ENCODE measurements at regions of chr13 and their contacts with region 1.

Region 1: GRCh38 chr13:31044377-31045285 is 112.2 kb downstream of the TEX26 start:
- DNase-seq: peak; percentile 59 to 73
- H3K4me3 ChIP-seq: peak overlapping the region; percentile 28; the same call in 1 of the 2 replicates
- H3K27ac ChIP-seq: peak overlapping the region; percentile 96
- H3K4me1 ChIP-seq: peaks cover 25% of the 10 kb centered on the region
- H3K27me3 ChIP-seq: no peaks in the 10 kb centered on the region
- CTCF ChIP-seq: peak; percentile 96

Region 2: GRCh38 chr13:30132623-30133553 is 911.7 kb before region 1 on chr13:
- CTCF ChIA-PET with region 1: no interaction called
- POLR2A ChIA-PET with region 1: no interaction called
- intact Hi-C with region 1: loop called (anchors 1 kb)
- DNase-seq: peak; percentile 75 to 90
- H3K4me3 ChIP-seq: no peak overlapping the region
- H3K27ac ChIP-seq: no peak overlapping the region
- H3K4me1 ChIP-seq: peaks cover 7% of the 10 kb centered on the region
- H3K27me3 ChIP-seq: no peaks in the 10 kb centered on the region
- CTCF ChIP-seq: peak; percentile 90

Region 3: DNA sequence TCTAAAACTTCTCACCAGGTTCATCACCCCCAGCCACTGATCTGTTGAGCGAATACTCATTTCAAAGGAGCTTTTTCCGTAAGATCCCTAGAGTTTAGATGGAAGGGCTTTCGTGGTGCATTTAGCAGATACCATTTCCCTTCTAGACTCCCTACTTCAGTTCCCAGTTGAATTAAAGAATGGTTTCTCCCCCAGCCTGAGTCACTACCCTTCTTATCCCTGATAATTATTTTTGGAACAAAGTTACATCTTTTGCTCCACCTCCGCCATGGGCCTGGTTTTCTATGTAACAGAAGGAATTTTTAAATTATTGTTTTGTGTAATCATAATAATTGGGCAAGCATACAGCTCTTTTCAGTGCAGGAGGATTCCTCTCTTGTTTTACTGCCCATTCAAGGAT is 405.0 kb before region 1 on chr13:
- CTCF ChIA-PET with region 1: no interaction called
- POLR2A ChIA-PET with region 1: interaction called, 25 read pairs
- intact Hi-C with region 1: no loop called
- DNase-seq: no peak
- H3K4me3 ChIP-seq: no peak overlapping the region
- H3K27ac ChIP-seq: no peak overlapping the region
- H3K4me1 ChIP-seq: no peaks in the 10 kb centered on the region
- H3K27me3 ChIP-seq: no peaks in the 10 kb centered on the region
- CTCF ChIP-seq: no peak

Region 4: DNA sequence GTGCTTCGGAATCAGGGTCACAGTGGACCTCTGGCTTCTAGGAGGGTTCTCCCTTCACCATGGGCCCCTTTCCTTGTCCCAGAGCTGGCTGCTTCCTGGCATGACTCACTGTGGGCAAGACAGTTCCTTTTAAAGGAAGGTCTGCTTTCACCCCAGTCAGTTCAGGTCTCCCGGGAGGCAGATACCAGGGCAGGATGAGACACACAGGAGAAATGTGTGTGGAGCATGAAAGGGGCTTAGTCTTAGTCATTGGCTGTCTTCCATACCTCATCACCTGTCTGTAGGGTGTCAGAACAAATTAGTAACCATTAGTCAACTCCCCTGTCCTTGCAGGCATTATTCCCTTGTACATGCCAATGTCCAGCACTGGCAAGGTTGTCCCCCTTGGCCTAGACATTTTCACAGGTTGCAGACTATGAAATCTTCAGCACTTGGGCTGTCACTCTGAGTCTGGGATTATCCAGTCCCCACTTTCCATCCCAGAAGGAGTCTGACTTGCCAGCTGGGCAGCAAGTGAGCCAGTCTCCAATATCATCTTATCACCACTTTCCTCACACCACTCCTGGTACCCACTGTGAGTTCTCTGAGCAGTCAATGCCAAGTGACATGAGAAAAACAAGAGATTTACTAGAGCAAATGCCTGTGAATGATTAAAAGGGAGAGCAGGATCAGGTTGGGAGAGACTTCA is 215.3 kb before region 1 on chr13:
- CTCF ChIA-PET with region 1: interaction called, 3 read pairs
- POLR2A ChIA-PET with region 1: no interaction called
- intact Hi-C with region 1: loop called (anchors 1 kb)
- DNase-seq: peak; percentile 59 to 91
- H3K4me3 ChIP-seq: no peak overlapping the region
- H3K27ac ChIP-seq: peak overlapping the region; percentile 86
- H3K4me1 ChIP-seq: peaks cover 62% of the 10 kb centered on the region
- H3K27me3 ChIP-seq: no peaks in the 10 kb centered on the region
- CTCF ChIP-seq: no peak

Region 5: DNA sequence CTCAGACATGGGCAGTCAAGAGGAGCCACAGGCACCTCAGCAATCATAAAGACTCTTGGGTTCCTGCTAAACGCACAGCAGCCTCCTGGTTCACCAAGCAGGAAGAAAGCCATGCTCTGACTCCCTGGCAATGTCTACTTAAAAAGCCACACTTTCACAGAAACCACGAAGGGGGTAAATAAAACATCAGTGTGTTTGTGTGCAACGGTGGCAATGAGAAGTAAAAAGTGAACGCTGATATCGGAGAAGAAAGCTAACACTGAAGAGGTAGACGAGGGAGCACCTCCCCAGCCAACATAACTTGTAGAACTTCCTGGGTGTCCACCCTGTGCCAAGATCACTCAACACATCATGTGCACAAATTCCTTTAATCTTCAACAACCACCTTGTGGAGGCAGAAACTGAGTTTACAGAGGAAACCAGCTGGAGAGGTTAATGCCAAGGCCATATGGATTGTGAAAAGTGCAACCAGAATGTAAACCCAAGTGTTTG is 86.9 kb after region 1 on chr13:
- CTCF ChIA-PET with region 1: no interaction called
- POLR2A ChIA-PET with region 1: no interaction called
- intact Hi-C with region 1: loop called (anchors 10 kb)
- DNase-seq: no peak
- H3K4me3 ChIP-seq: no peak overlapping the region
- H3K27ac ChIP-seq: no peak overlapping the region
- H3K4me1 ChIP-seq: no peaks in the 10 kb centered on the region
- H3K27me3 ChIP-seq: peaks cover 7% of the 10 kb centered on the region
- CTCF ChIP-seq: no peak

Region 6: DNA sequence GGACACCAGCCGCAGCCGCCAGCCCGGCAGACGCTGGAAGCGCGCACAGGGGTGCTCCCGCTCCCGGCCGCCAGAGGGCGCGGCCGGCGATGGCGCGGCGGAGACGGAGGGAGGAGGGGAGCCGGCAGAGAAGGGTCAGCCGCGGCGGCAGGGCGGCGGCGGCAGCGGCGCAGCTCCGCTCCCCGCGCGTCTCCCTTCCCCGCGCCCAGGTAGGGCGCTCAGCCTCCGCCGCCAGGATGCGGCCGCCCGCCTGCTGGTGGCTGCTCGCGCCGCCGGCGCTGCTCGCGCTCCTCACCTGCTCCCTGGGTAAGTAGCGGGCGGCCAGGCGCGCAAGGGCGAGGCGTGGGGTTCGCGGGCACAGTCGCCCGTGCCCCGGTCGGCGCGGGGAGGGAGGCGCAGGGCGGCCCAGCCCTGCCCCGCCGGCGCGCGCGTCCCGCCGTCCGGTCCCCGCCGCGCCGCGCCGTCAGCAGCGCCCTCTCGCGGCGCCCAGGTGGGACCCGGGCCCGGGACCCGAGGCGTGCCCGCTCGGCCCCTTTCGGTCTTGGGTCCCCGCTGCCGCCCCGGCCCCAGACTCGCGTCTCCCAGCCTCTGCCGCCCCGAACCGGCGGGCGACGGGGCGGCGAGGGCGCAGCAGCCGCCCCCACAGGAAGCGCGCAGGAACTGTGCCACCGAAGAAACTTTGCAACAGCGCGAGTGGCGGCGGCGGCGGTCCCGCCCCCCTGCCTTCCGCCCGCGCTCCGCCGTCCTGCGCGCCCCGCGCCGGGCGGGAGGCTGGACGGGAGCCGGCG is 155.4 kb after region 1 on chr13 and contains the start of gene B3GLCT:
- CTCF ChIA-PET with region 1: no interaction called
- POLR2A ChIA-PET with region 1: no interaction called
- intact Hi-C with region 1: loop called (anchors 5 kb)
- DNase-seq: peak; percentile 59 to 82
- H3K4me3 ChIP-seq: peak within 1 kb of the TSS; percentile 80
- H3K27ac ChIP-seq: peak within 1 kb of the TSS; percentile 39; the same call in 1 of the 2 replicates
- H3K4me1 ChIP-seq: peaks cover 25% of the 10 kb centered on the region
- H3K27me3 ChIP-seq: no peaks in the 10 kb centered on the region
- CTCF ChIP-seq: peak; percentile 62
- total RNA-seq, gene B3GLCT: 3.5 and 5.4 TPM in 2 replicates